AG04450 (cell line): ENCODE measurements at regions of chr16 and their contacts with region 1.

Region 1: GRCh38 chr16:28895609-28896008 is 17.3 kb downstream of the ATP2A1 start:
- DNase-seq: no peak
- H3K4me3 ChIP-seq: no peak overlapping the region
- H3K27ac ChIP-seq: no peak overlapping the region
- H3K27me3 ChIP-seq: no peaks in the 10 kb centered on the region
- CTCF ChIP-seq: no peak

Region 2: GRCh38 chr16:28553776-28554633 is 341.6 kb before region 1 on chr16 and contains the start of gene SGF29:
- CTCF ChIA-PET with region 1: no interaction called
- POLR2A ChIA-PET with region 1: no interaction called
- DNase-seq: peak; percentile 86
- H3K4me3 ChIP-seq: peak within 1 kb of the TSS; percentile 86
- H3K27ac ChIP-seq: peak within 1 kb of the TSS; percentile 97
- H3K27me3 ChIP-seq: no peaks in the 10 kb centered on the region
- CTCF ChIP-seq: peak; percentile 27; the same call in 1 of the 2 replicates
- polyA plus RNA-seq, gene SGF29: 1.7 and 3.1 TPM in 2 replicates

Region 3: DNA sequence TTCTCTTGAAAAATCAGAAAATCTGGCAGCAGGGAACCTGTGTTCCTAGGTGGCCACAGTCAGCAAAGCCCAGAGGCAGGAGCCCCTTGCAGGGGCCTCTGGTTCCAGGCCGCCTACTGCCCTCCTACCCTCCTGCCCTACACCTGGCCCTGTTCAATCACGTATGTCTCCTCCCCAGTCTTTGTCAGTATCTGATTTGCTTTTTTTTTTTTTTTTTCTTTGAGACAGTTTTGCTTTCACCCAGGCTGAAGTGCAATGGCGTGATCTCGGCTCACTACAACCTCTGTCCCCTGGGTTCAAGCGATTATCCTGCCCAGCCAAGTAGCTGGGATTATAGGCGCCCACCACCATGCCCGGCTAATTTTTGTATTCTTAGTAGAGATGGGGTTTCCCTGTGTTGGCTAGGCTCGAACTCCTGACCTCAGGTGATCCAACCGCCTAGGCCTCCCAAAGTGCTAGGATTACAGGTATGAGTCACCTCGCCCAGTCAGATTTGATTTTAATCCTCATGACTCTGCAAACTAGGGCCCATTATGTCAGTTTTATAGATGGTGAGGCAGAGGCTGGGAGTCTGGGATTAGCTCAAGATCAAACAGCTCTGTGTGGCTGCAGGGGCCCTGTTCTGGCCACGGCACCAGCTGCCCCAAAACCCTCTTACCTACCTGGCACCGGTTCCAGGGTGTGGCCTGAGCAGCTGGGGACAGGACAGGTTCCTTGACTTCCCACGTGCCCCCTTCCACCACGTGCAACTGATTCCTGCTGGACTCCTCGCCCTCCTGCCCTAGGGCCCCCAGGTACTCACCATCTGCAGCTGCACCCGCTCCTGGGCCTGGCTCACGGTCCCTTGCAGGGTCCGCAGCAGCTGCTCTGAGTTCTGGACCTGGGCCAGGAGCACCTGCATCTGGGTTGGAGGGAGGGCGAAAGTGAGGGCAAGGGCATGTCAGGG is 14.8 kb after region 1 on chr16:
- CTCF ChIA-PET with region 1: no interaction called
- POLR2A ChIA-PET with region 1: interaction called, 13 read pairs
- DNase-seq: no peak
- H3K4me3 ChIP-seq: no peak overlapping the region
- H3K27ac ChIP-seq: no peak overlapping the region
- H3K27me3 ChIP-seq: no peaks in the 10 kb centered on the region
- CTCF ChIP-seq: no peak